ENCODE measurements at regions of chr19 and their contacts with region 1.

Region 1: GRCh38 chr19:52336117-52336790 is at the start of gene ZNF610:
- DNase-seq: peak; percentile 96
- ATAC-seq: peak; percentile 97
- H3K4me3 Mint-ChIP-seq: peak within 1 kb of the TSS; percentile 97
- H3K27ac Mint-ChIP-seq: peak within 1 kb of the TSS; percentile 96
- H3K4me1 Mint-ChIP-seq: peaks cover 10% of the 10 kb centered on the region
- H3K27me3 Mint-ChIP-seq: no peaks in the 10 kb centered on the region
- total RNA-seq, gene ZNF610: 2.3 to 3.3 TPM

Region 2: GRCh38 chr19:52086481-52086880 is 249.8 kb before region 1 on chr19:
- CTCF ChIA-PET with region 1: no interaction called
- POLR2A ChIA-PET with region 1: no interaction called
- intact Hi-C with region 1: no loop called
- DNase-seq: no peak
- ATAC-seq: no peak
- H3K4me3 Mint-ChIP-seq: no peak overlapping the region
- H3K27ac Mint-ChIP-seq: no peak overlapping the region
- H3K4me1 Mint-ChIP-seq: no peaks in the 10 kb centered on the region
- H3K27me3 Mint-ChIP-seq: no peaks in the 10 kb centered on the region

Region 3: DNA sequence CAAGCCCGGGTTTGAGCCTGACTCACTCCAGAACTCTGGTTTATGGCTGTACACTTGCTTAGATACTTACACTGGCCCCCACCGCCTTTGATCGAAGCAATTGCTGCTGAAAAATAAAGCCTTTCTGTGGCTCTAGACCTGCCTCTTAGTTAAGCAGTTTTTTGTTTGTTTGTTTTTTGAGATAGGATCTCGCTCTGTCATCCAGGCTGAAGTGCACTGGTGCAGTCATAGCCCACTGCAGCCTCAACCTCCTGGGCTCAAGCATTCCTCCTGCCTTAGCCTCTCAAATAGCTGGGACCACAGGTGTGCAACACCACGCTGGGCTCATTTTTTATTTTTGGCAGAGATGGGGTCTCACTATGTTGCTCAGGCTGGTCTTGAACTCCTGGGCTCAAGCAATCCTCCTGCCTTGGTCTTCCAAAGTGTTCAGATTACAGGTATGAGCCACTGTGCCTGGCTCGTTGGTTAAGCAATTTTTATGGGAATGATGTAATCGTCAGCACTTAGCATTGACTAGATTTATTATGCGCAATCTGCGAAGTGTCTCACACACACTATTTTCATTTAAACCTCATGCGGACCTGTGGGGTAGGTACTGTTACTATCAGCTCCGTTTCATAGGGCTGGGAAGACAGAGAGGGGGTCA is 124.2 kb before region 1 on chr19:
- CTCF ChIA-PET with region 1: no interaction called
- POLR2A ChIA-PET with region 1: no interaction called
- intact Hi-C with region 1: no loop called
- DNase-seq: no peak
- ATAC-seq: no peak
- H3K4me3 Mint-ChIP-seq: no peak overlapping the region
- H3K27ac Mint-ChIP-seq: no peak overlapping the region
- H3K4me1 Mint-ChIP-seq: no peaks in the 10 kb centered on the region
- H3K27me3 Mint-ChIP-seq: no peaks in the 10 kb centered on the region

Region 4: DNA sequence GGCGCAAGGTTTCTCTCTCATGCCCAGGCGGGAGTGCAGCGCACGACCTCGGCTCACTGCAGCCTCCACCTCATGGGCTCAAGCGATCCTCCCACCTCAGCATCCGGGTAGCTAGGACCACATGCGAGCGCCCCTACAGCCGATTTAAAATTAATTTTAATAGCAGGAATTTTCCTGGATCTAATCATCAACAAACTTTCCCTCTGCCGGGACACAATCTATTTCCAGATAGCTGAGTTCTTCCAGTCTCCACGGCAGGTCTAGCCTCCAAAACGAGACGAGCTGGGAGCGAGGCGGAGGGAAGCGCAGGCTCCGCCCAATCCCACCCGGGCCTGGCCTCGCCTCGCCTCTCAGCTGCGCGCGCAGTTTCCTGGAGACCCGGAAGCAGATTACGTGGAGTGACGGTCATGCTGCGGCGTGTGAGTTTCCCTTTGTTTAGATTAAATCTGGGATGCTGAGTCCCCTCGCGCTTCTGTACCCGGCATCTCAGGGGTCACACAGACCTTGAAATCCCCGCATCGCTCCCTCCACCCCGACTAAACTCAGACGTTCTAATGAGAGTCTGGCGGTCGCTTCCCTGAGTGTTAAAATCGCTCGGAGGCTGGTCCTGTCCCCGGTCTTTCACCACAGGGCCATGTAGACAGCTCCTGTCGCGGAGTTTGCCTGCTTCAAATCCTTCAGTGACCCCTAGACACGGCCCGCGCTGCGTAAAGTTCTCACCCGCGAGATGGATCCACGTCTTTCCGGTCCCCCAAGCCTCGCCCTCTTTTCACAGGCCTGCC is 33.5 kb after region 1 on chr19 and contains the start of gene ZNF880:
- CTCF ChIA-PET with region 1: no interaction called
- POLR2A ChIA-PET with region 1: interaction called, 4 read pairs
- intact Hi-C with region 1: loop called (anchors 1 to 2 kb)
- DNase-seq: peak; percentile 96
- ATAC-seq: peak; percentile 99
- H3K4me3 Mint-ChIP-seq: peak within 1 kb of the TSS; percentile 94
- H3K27ac Mint-ChIP-seq: peak within 1 kb of the TSS; percentile 99
- H3K4me1 Mint-ChIP-seq: peaks cover 11% of the 10 kb centered on the region
- H3K27me3 Mint-ChIP-seq: no peaks in the 10 kb centered on the region
- total RNA-seq, gene ZNF880: 11.5 to 13.7 TPM

Measured in activated CD4-positive, alpha-beta T cell treated with anti-CD3 and anti-CD28 coated beads for 36 hours (primary cell).